Endothelial cell of umbilical vein (primary cell): ENCODE measurements at regions of chr11 and their contacts with region 1.

Region 1: DNA sequence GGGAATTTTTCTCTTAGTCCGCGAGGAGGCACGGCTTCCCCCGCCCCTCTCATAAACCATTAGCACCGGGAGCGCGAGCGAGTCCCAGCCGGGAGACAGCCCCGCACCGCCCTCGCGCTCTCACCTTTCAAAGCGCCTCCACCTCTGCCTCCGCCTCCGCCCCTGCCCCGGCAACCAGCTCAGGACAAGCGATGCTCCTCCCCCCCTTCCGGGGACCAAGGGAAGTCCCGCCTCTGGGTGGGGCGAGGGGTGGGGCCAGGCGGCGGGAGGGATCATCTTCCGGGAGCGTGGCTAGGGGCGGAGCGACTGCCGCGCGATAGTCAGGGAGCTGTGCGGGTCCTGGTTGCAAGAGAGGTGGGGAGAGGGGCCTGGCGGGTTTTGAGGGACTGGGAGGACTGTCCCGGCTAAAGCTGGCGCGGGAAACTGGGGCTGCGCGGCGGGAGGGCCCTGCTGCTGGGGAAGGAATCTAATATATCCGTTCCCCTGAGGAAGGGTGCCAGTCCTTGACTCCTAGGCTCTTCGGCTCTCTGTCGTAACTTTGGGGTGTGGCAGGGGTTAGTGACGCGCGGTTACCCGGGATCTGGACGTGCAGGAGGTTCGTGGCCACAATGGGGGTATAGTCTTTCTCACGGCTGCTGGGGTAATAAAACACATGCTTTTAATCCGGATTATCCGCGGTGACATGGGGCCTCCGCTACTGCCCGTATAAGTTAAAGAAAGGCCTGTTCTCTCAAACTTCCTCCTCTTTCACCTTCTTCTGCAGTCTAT is at the starts of genes CCDC82 and JRKL:
- DNase-seq: peak; percentile 96
- H3K4me3 ChIP-seq: peak within 1 kb of the TSS; percentile 84 to 98 (median 94)
- H3K27ac ChIP-seq: peak within 1 kb of the TSS; percentile 61
- H3K4me1 ChIP-seq: peaks cover 19% of the 10 kb centered on the region
- H3K27me3 ChIP-seq: no peaks in the 10 kb centered on the region
- CTCF ChIP-seq: no peak
- POLR2A ChIP-seq: no peak
- total RNA-seq, gene CCDC82: 32.8 and 33.4 TPM in 2 replicates
- total RNA-seq, gene JRKL: 7.0 and 7.6 TPM in 2 replicates

Region 2: DNA sequence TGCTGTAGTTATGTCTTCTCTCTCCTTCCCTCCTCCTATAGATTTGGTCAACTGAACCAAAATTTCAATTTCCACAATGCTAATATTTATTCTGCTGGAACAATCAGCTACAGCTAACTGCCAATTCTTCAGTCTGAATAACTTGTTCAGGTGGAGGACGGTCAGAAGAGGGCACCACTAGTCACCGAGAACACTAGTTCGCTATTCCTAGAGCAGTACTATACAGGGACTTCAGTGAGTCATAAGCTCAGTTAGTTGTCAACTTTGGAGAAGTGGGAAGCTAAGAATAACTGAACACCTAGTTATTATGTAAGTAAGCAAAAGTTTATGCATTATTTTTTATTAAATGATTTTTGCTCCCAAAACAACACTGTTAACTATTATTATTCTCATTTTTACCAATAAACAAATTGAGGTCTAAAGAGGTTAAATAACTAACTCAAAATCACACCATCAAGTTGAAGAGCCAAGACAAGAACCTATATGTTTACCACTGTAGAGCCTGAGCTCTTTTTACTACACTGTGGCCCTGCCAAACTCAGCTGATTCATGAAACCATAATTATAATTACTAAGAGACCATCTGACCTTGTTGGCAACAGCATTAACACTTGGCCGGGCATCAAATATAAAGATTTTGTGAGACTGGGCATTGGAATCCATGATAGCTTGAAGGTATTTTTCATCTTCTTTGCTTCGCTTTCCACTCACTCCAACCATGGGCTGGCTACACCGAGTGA is 540.6 kb before region 1 on chr11:
- CTCF ChIA-PET with region 1: interaction called, 82 read pairs
- POLR2A ChIA-PET with region 1: no interaction called
- dilution Hi-C with region 1: no loop called
- intact Hi-C with region 1: loop called (anchors 1 kb)
- DNase-seq: peak; percentile 82
- H3K4me3 ChIP-seq: no peak overlapping the region
- H3K27ac ChIP-seq: no peak overlapping the region
- H3K4me1 ChIP-seq: no peaks in the 10 kb centered on the region
- H3K27me3 ChIP-seq: no peaks in the 10 kb centered on the region
- CTCF ChIP-seq: peak; percentile 46 to 54
- POLR2A ChIP-seq: no peak

Region 3: GRCh38 chr11:95977534-95978174 is 412.2 kb before region 1 on chr11:
- CTCF ChIA-PET with region 1: interaction called, 3 read pairs
- POLR2A ChIA-PET with region 1: no interaction called
- dilution Hi-C with region 1: no loop called
- intact Hi-C with region 1: loop called (anchors 5 kb)
- DNase-seq: peak; percentile 78
- H3K4me3 ChIP-seq: no peak overlapping the region
- H3K27ac ChIP-seq: peak overlapping the region; percentile 74
- H3K4me1 ChIP-seq: peaks cover 22% of the 10 kb centered on the region
- H3K27me3 ChIP-seq: no peaks in the 10 kb centered on the region
- CTCF ChIP-seq: no peak
- POLR2A ChIP-seq: no peak

Region 4: GRCh38 chr11:96054870-96055705 is 334.8 kb before region 1 on chr11:
- CTCF ChIA-PET with region 1: interaction called, 63 read pairs
- POLR2A ChIA-PET with region 1: no interaction called
- dilution Hi-C with region 1: no loop called
- intact Hi-C with region 1: loop called (anchors 1 kb)
- DNase-seq: peak; percentile 71
- H3K4me3 ChIP-seq: no peak overlapping the region
- H3K27ac ChIP-seq: no peak overlapping the region
- H3K4me1 ChIP-seq: peaks cover 14% of the 10 kb centered on the region
- H3K27me3 ChIP-seq: no peaks in the 10 kb centered on the region
- CTCF ChIP-seq: peak; percentile 37 to 39
- POLR2A ChIP-seq: no peak

Region 5: DNA sequence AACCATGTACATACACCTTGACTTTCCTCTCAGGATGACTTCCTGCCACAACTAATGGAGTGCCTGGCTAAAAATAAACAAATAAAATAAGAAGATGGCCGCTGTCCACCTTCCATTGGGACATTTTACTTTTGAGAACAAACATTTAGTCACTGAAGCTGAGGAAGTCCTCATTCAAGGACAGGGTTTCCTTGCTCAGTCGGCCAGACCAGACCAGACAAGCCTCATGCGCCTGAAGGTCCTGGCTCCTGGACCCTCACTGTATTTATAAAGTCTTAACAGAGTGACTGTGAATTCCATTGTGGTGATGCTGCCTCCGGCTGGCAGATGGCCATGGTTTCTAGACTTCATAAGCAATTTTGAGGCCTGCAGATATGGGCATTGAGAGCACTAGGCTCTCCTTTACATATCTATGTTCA is 161.4 kb before region 1 on chr11:
- CTCF ChIA-PET with region 1: no interaction called
- POLR2A ChIA-PET with region 1: no interaction called
- dilution Hi-C with region 1: no loop called
- intact Hi-C with region 1: loop called (anchors 1 kb)
- DNase-seq: peak; percentile 96
- H3K4me3 ChIP-seq: peak overlapping the region in 1 of 3 experiments; percentile 9
- H3K27ac ChIP-seq: peak overlapping the region; percentile 98
- H3K4me1 ChIP-seq: peaks cover 50% of the 10 kb centered on the region
- H3K27me3 ChIP-seq: no peaks in the 10 kb centered on the region
- CTCF ChIP-seq: no peak
- POLR2A ChIP-seq: no peak

Region 6: GRCh38 chr11:96366024-96366423 is 23.9 kb before region 1 on chr11:
- CTCF ChIA-PET with region 1: interaction called, 12 read pairs
- POLR2A ChIA-PET with region 1: no interaction called
- dilution Hi-C with region 1: no loop called
- intact Hi-C with region 1: no loop called
- DNase-seq: no peak
- H3K4me3 ChIP-seq: no peak overlapping the region
- H3K27ac ChIP-seq: no peak overlapping the region
- H3K4me1 ChIP-seq: no peaks in the 10 kb centered on the region
- H3K27me3 ChIP-seq: no peaks in the 10 kb centered on the region
- CTCF ChIP-seq: no peak
- POLR2A ChIP-seq: no peak